ENCODE measurements at regions of chr14 and their contacts with region 1.

Region 1: DNA sequence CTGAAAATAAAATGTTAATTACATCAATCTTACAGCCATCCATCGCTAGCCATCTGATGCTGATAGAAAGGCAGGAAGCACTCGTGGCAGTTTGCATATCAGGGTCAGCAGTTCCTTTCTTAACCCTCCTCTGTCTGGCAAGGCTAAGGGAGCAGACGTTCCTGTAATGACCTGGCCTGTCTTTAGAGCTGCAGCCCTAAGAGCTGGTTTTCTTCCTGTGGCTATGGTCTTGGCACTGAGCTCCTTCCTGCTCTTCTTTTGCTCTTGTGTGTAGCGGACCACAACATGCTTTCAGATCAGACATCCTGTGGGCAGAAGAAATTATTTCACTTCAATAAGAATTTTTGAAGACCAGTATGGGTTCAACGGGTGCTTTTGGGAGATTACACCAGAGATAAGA is 170.4 kb downstream of the DAD1 start:
- DNase-seq: peak; percentile 48
- ATAC-seq: peak; percentile 88
- H3K4me3 ChIP-seq: no peak overlapping the region
- H3K27ac ChIP-seq: no peak overlapping the region; the same call in 1 of the 2 replicates
- H3K4me1 ChIP-seq: peaks cover 13% of the 10 kb centered on the region
- H3K27me3 ChIP-seq: no peaks in the 10 kb centered on the region
- CTCF ChIP-seq: no peak
- EP300 ChIP-seq: no peak
- POLR2A ChIP-seq: no peak
- RAD21 ChIP-seq: no peak

Region 2: DNA sequence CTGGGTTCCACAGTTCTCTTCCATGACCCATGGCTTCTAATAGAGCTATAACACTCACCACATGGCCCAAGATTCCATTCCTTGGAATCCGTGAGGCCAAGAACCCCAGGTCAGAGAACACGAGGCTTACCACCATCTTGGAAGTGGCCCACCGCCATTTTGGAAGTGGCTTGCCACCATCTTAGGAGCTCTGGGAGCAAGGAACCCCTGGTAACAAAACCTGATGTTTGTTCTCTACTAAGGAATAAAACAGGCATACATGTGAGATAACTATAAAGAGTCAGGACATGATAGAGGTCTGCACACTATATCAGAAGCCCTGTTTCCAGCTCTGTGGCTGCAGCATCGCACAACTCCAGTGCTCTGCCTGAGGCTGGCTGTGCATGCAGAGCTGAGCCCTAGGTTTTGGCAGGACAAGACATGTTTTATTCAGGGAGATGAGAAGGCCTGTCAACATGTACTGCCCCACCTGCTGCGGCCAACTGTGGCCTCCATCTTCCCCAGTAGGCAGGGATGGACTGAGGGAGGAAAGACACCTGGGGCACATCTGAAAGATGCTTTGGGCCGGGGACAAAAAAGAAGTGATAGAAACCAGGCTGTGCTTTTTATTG is 174.6 kb before region 1 on chr14:
- CTCF ChIA-PET with region 1: no interaction called
- POLR2A ChIA-PET with region 1: no interaction called
- RAD21 ChIA-PET with region 1: no interaction called
- SMC1A ChIA-PET with region 1: no interaction called
- in situ Hi-C with region 1: no loop called
- intact Hi-C with region 1: no loop called
- DNase-seq: no peak
- ATAC-seq: no peak
- H3K4me3 ChIP-seq: no peak overlapping the region
- H3K27ac ChIP-seq: no peak overlapping the region
- H3K4me1 ChIP-seq: no peaks in the 10 kb centered on the region
- H3K27me3 ChIP-seq: no peaks in the 10 kb centered on the region; a peak in 1 of 4 replicates
- CTCF ChIP-seq: no peak
- EP300 ChIP-seq: no peak
- POLR2A ChIP-seq: no peak
- RAD21 ChIP-seq: no peak

Region 3: DNA sequence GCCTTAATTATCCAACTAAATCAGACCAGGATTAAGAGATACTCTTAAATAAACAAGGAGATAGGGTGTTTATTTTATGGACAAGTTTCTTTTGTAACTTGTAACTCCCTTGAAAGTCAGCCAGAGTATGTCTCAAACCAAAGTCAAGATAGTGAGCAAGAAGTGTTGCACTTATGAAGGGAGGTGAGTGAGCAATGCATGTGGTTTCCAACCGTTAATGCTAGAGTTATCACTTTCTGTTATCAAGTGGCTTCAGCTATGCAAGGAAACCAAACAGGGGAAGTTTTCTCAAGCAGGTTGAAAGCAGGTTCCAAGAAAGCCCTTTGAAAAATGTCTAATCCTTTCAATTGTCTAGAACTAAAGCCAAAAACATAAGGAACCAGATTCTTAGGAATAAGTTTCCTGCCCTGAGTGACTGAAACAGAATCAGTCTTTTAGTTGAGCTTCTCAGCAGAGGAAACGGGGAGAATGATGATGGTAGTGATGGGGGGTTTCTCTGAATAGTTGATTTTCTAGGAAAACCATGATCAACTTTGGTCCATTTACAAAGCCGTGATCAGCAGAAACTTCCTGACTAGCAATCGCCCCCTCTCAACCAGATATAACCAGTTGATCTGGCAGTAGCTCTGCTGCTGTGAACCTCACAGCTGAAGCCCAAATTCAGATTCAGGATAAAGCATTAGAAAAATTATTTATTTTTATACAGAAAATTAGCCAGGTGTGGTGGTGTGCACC is 42.0 kb after region 1 on chr14:
- CTCF ChIA-PET with region 1: interaction called, 16 read pairs
- POLR2A ChIA-PET with region 1: interaction called, 3 read pairs
- RAD21 ChIA-PET with region 1: interaction called, 11 read pairs
- SMC1A ChIA-PET with region 1: interaction called, 35 read pairs
- in situ Hi-C with region 1: no loop called
- intact Hi-C with region 1: no loop called
- DNase-seq: no peak
- ATAC-seq: peak; percentile 55
- H3K4me3 ChIP-seq: no peak overlapping the region
- H3K27ac ChIP-seq: peak overlapping the region; percentile 69
- H3K4me1 ChIP-seq: peaks cover 61% of the 10 kb centered on the region
- H3K27me3 ChIP-seq: no peaks in the 10 kb centered on the region
- CTCF ChIP-seq: no peak
- EP300 ChIP-seq: peak; percentile 67 to 69
- POLR2A ChIP-seq: no peak
- RAD21 ChIP-seq: no peak

Measured in GM12878 (cell line).